ENCODE measurements at regions of chr15 and their contacts with region 1.

Region 1: GRCh38 chr15:60520825-60521368 is 42.0 kb upstream of the ICE2 start:
- DNase-seq: peak; percentile 50 to 75 (median 67)
- ATAC-seq: peak; percentile 94
- H3K4me3 ChIP-seq: no peak overlapping the region
- H3K4me3 Mint-ChIP-seq: peak overlapping the region in 2 of 10 donors; percentile 1 to 25
- H3K27ac ChIP-seq: no peak overlapping the region
- H3K27ac Mint-ChIP-seq: peak overlapping the region; percentile 1 to 85 (median 59)
- H3K4me1 ChIP-seq: peaks cover 7 to 13% of the 10 kb centered on the region in 2 donors
- H3K4me1 Mint-ChIP-seq: peaks cover 36 to 64% (median 63%) of the 10 kb centered on the region in 7 donors
- H3K27me3 ChIP-seq: no peaks in the 10 kb centered on the region
- H3K27me3 Mint-ChIP-seq: no peaks in the 10 kb centered on the region

Region 2: GRCh38 chr15:60299452-60300047 is 221.3 kb before region 1 on chr15:
- CTCF ChIA-PET with region 1: no interaction called
- POLR2A ChIA-PET with region 1: no interaction called
- intact Hi-C with region 1: no loop called
- DNase-seq: no peak
- ATAC-seq: no peak
- H3K4me3 ChIP-seq: no peak overlapping the region
- H3K4me3 Mint-ChIP-seq: no peak overlapping the region
- H3K27ac ChIP-seq: no peak overlapping the region
- H3K27ac Mint-ChIP-seq: no peak overlapping the region
- H3K4me1 ChIP-seq: no peaks in the 10 kb centered on the region
- H3K4me1 Mint-ChIP-seq: peaks cover 0 to 5% (median 0%) of the 10 kb centered on the region in 7 donors
- H3K27me3 ChIP-seq: no peaks in the 10 kb centered on the region
- H3K27me3 Mint-ChIP-seq: peaks cover 3 to 11% (median 10%) of the 10 kb centered on the region in 5 donors

Region 3: GRCh38 chr15:60362321-60363086 is 158.4 kb before region 1 on chr15:
- CTCF ChIA-PET with region 1: interaction called, 8 read pairs
- POLR2A ChIA-PET with region 1: no interaction called
- intact Hi-C with region 1: loop called (anchors 1 kb)
- DNase-seq: peak in 1 of 9 donors; percentile 46
- ATAC-seq: peak; percentile 31
- H3K4me3 ChIP-seq: no peak overlapping the region
- H3K4me3 Mint-ChIP-seq: peak overlapping the region in 1 of 10 donors; percentile 54
- H3K27ac ChIP-seq: no peak overlapping the region
- H3K27ac Mint-ChIP-seq: peak overlapping the region in 3 of 9 donors; percentile 47 to 81 (median 78)
- H3K4me1 ChIP-seq: peaks cover 0 to 7% of the 10 kb centered on the region in 2 donors
- H3K4me1 Mint-ChIP-seq: peaks cover 6 to 39% (median 12%) of the 10 kb centered on the region in 7 donors
- H3K27me3 ChIP-seq: no peaks in the 10 kb centered on the region
- H3K27me3 Mint-ChIP-seq: no peaks in the 10 kb centered on the region

Region 4: DNA sequence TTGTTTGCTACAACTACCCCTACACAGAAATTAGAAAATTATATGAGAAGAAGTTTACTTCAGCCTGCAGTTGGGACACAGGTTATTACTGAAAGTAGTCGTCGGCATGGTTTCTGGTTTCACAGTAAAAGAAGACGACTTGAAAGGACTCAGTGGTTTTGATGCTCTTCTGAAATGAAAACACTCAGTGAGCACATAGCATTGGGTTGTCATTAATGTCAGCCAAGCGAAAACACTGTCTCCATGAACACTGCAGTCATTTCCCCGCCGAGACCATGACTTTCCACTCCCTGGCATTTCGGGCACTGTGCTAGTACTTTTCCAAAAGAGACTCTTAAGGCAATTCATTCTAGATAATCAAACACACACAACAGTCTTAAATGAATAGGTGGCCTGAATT is 27.2 kb after region 1 on chr15:
- CTCF ChIA-PET with region 1: interaction called, 12 read pairs
- POLR2A ChIA-PET with region 1: interaction called, 3 read pairs
- intact Hi-C with region 1: loop called in 1 of 2 experiments (anchors 2 kb)
- DNase-seq: peak in 8 of 9 donors; percentile 26 to 64 (median 40)
- ATAC-seq: peak; percentile 69
- H3K4me3 ChIP-seq: peak overlapping the region; percentile 6
- H3K4me3 Mint-ChIP-seq: peak overlapping the region; percentile 53 to 84 (median 70)
- H3K27ac ChIP-seq: peak overlapping the region; percentile 28
- H3K27ac Mint-ChIP-seq: peak overlapping the region; percentile 77 to 96 (median 88)
- H3K4me1 ChIP-seq: peaks cover 47 to 69% of the 10 kb centered on the region in 2 donors
- H3K4me1 Mint-ChIP-seq: peaks cover 63 to 96% (median 93%) of the 10 kb centered on the region in 7 donors
- H3K27me3 ChIP-seq: no peaks in the 10 kb centered on the region
- H3K27me3 Mint-ChIP-seq: no peaks in the 10 kb centered on the region

Region 5: GRCh38 chr15:60592371-60593169 is 71.7 kb after region 1 on chr15:
- CTCF ChIA-PET with region 1: interaction called, 16 read pairs
- POLR2A ChIA-PET with region 1: interaction called, 3 read pairs
- intact Hi-C with region 1: no loop called
- DNase-seq: peak; percentile 72 to 89 (median 86)
- ATAC-seq: peak; percentile 95
- H3K4me3 ChIP-seq: peak overlapping the region; percentile 75
- H3K4me3 Mint-ChIP-seq: peak overlapping the region; percentile 84 to 89 (median 86)
- H3K27ac ChIP-seq: peak overlapping the region; percentile 96
- H3K27ac Mint-ChIP-seq: peak overlapping the region; percentile 83 to 93 (median 85)
- H3K4me1 ChIP-seq: peaks cover 6 to 29% of the 10 kb centered on the region in 2 donors
- H3K4me1 Mint-ChIP-seq: peaks cover 19 to 53% (median 48%) of the 10 kb centered on the region in 7 donors
- H3K27me3 ChIP-seq: no peaks in the 10 kb centered on the region
- H3K27me3 Mint-ChIP-seq: peaks cover 0 to 4% (median 0%) of the 10 kb centered on the region in 5 donors

Region 6: GRCh38 chr15:61834076-61834697 is 1313.3 kb after region 1 on chr15:
- CTCF ChIA-PET with region 1: no interaction called
- POLR2A ChIA-PET with region 1: no interaction called
- intact Hi-C with region 1: loop called in 1 of 2 experiments (anchors 5 kb)
- DNase-seq: peak; percentile 21 to 74 (median 56)
- ATAC-seq: peak; percentile 85
- H3K4me3 ChIP-seq: no peak overlapping the region
- H3K4me3 Mint-ChIP-seq: peak overlapping the region in 2 of 10 donors; percentile 1 to 11
- H3K27ac ChIP-seq: no peak overlapping the region
- H3K27ac Mint-ChIP-seq: no peak overlapping the region
- H3K4me1 ChIP-seq: no peaks in the 10 kb centered on the region
- H3K4me1 Mint-ChIP-seq: peaks cover 0 to 6% (median 4%) of the 10 kb centered on the region in 7 donors
- H3K27me3 ChIP-seq: no peaks in the 10 kb centered on the region
- H3K27me3 Mint-ChIP-seq: peaks cover 19 to 28% (median 28%) of the 10 kb centered on the region in 5 donors

Measured in naive thymus-derived CD4-positive, alpha-beta T cell (primary cell).